ENCODE measurements at regions of chr11 and their contacts with region 1.

Region 1: GRCh38 chr11:38123673-38124072 is 1525.6 kb upstream of the RAG2 start:
- DNase-seq: no peak
- H3K4me3 Mint-ChIP-seq: no peak overlapping the region
- H3K27ac Mint-ChIP-seq: no peak overlapping the region
- H3K4me1 Mint-ChIP-seq: no peaks in the 10 kb centered on the region
- H3K27me3 Mint-ChIP-seq: no peaks in the 10 kb centered on the region

Region 2: DNA sequence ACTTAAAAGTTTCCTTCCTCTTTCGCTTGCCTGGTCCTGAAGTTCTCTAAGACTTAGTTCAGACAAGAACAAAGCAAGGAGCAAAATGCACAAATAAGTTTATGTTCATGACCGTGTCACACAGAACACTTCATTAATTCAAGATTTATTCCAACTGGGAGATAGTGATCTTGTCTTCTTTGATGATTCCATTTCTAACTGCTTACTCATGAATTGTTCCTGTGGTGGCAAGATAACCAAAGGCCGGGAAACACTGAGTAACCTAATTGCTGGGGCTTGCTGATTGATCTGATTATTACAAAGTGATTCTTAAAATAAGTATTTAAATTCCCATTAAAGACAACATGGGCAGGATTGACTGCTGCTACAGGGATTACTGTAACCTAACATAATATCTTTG is 62.8 kb before region 1 on chr11:
- CTCF ChIA-PET with region 1: no interaction called
- POLR2A ChIA-PET with region 1: no interaction called
- intact Hi-C with region 1: loop called (anchors 10 kb)
- DNase-seq: no peak
- H3K4me3 Mint-ChIP-seq: no peak overlapping the region
- H3K27ac Mint-ChIP-seq: no peak overlapping the region
- H3K4me1 Mint-ChIP-seq: no peaks in the 10 kb centered on the region
- H3K27me3 Mint-ChIP-seq: no peaks in the 10 kb centered on the region